Dorsolateral prefrontal cortex (tissue), 120 donors: ENCODE measurements at regions of chr9 and their contacts with region 1.

Region 1: GRCh38 chr9:19464764-19465585 is 56.2 kb downstream of the ACER2 start:
- DNase-seq: peak; percentile 67 to 85 (median 78)
- H3K4me3 ChIP-seq: peak overlapping the region; percentile 38 to 77 (median 62)
- H3K27ac ChIP-seq: peak overlapping the region in 57 of 59 donors; percentile 19 to 95 (median 80)
- H3K27me3 ChIP-seq: no peaks in the 10 kb centered on the region
- CTCF ChIP-seq: peak; percentile 29 to 97 (median 81)

Region 2: GRCh38 chr9:19048966-19049916 is 415.7 kb before region 1 on chr9 and contains the start of gene RRAGA:
- intact Hi-C with region 1: loop called in 1 of 2 experiments (anchors 5 kb)
- DNase-seq: peak; percentile 89 to 96 (median 94)
- H3K4me3 ChIP-seq: peak within 1 kb of the TSS; percentile 61 to 99 (median 90)
- H3K27ac ChIP-seq: peak within 1 kb of the TSS; percentile 83 to 100 (median 97)
- H3K27me3 ChIP-seq: no peaks in the 10 kb centered on the region
- CTCF ChIP-seq: peak; percentile 66 to 96 (median 88)
- total RNA-seq, gene RRAGA: 71.2 to 162 (median 128) TPM

Region 3: DNA sequence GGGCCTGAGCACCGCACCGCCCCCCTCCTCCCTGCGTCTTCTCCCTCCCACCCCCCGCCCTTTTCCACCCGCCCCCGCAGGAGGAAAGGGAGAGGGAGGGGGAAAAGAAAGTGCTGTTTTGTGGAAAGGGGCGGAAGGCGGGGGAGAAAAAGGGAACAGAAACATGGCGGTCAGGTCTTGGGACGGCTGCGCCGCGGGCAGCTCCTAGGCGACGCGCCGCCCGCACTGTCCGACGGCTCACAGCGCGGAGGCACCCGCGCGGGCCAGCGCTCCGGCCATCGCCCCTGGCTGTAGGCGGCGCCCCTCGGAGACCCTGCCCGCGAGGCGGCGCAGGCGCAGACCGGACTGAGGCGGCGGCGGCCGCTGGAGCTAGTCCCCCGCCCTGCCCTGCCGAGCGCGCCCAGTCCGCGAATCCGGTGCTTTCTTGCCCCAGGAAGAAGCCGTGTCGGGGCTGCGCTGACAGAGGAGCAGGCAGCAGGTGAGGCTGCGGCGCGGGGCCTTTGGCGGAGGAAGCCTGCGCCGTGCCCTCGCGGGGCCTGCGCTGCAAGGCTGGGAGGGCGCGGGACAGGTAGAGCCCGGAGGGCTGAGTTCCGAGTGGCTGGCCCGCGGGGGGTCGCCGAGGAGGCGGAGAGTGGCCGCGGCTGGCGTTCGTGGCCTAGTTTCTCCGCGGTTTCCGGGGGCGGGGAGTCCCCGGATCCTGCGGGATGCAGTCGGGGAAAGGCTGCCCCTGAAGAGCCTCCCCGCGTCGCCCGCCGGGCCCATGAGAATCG is 234.4 kb before region 1 on chr9 and contains the start of gene DENND4C:
- intact Hi-C with region 1: loop called in 1 of 2 experiments (anchors 5 kb)
- DNase-seq: peak; percentile 65 to 90 (median 79)
- H3K4me3 ChIP-seq: peak within 1 kb of the TSS; percentile 58 to 100 (median 98)
- H3K27ac ChIP-seq: peak within 1 kb of the TSS; percentile 83 to 100 (median 97)
- H3K27me3 ChIP-seq: no peaks in the 10 kb centered on the region
- CTCF ChIP-seq: peak in 35 of 56 donors; percentile 5 to 66 (median 34)
- total RNA-seq, gene DENND4C: 25.3 to 66.1 (median 39.0) TPM

Region 4: DNA sequence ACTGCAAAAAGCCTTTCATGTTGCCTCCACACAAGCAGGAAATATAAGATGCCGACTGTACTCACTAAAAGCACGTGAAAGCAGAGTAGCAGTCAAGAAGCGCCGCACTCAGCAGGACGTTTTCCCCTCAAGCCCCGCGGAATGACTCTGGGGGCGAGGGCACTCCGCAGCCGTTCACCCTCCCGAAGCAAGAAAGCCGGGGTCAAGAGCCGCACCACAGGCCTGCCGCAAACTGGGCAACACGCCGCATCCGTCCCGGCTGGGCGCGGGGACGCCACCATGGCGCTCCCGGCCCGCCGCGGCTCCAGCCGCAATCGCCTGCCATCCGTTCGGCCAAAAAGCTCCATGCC is 85.3 kb before region 1 on chr9:
- intact Hi-C with region 1: loop called in 1 of 2 experiments (anchors 5 kb)
- DNase-seq: peak in 3 of 10 donors; percentile 25 to 53 (median 32)
- H3K4me3 ChIP-seq: peak overlapping the region; percentile 58 to 95 (median 85)
- H3K27ac ChIP-seq: peak overlapping the region; percentile 60 to 98 (median 93)
- H3K27me3 ChIP-seq: no peaks in the 10 kb centered on the region
- CTCF ChIP-seq: no peak

Region 5: DNA sequence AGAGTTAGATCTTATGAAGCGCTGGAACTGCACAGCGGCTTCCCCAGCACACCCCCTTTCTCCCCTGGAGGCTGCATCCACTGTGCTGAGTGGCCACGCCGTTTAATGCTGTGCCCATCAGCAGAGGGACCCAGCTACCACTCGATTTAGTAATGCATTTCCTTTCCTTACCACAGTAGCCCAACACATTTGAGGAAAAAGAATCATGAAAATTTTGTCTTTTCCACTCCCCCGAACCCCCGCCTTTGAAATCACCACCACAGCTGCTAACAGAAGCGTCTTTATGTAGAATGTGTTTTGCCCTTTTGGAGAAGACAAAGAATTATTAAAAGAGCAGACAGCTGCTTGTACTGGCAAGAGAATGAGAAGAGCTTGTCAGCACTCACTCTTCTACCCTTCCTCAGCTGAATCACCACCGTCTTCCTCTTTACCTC is 17.0 kb after region 1 on chr9:
- intact Hi-C with region 1: no loop called
- DNase-seq: peak in 9 of 10 donors; percentile 55 to 87 (median 74)
- H3K4me3 ChIP-seq: peak overlapping the region in 24 of 59 donors; percentile 7 to 47 (median 24)
- H3K27ac ChIP-seq: peak overlapping the region; percentile 80 to 100 (median 97)
- H3K27me3 ChIP-seq: no peaks in the 10 kb centered on the region
- CTCF ChIP-seq: peak in 54 of 56 donors; percentile 25 to 72 (median 54)

Region 6: DNA sequence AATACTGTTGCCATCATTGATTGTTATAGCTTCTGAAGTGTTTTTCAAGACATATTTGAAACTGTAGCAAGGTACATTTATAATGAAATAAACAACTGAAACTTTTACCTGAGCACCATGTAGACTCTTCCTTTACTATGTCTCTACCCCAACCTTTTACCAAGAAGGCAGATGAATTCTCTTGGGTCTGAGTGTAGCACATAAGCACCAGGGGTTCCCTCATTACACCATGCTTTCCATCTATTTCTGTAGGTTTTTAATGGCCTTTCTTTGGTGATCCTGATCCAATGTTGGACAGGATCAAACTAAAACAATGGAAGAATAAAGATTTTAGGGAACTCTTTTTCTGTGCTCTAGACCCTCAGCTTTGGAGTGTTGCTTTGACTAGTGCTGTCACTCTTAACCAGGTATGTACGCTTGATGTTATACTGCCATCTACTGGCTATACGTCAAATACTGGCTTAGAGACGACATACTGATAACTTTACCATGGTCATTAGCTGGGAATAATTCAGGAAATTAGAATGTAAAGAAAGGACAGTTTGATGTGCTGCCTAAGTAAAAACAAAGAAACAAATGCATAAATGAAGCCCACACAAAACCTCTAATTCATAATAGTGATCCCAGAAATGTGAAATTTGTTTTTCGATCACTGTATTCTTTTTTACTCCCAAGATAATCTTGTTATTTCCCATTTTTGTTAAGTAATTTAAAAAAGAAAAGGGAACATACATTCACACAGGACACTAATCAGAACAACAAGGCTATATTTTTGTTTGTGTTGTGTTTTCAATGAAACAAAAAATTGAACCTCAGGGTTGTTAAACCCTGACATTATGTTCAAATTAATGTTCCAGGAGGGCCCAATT is 1646.0 kb after region 1 on chr9:
- intact Hi-C with region 1: loop called in 1 of 2 experiments (anchors 10 kb)
- DNase-seq: peak in 1 of 10 donors; percentile 27
- H3K4me3 ChIP-seq: no peak overlapping the region
- H3K27ac ChIP-seq: no peak overlapping the region
- H3K27me3 ChIP-seq: no peaks in the 10 kb centered on the region
- CTCF ChIP-seq: peak; percentile 50 to 92 (median 82)